ENCODE measurements at regions of chr2 and their contacts with region 1.

Region 1: GRCh38 chr2:72137498-72138010 is 10.1 kb downstream of the CYP26B1 start:
- DNase-seq: peak in 1 of 2 donors; percentile 39
- ATAC-seq: peak; percentile 53 to 86
- H3K4me3 ChIP-seq: peak overlapping the region in 1 of 4 donors; percentile 11
- H3K27ac ChIP-seq: no peak overlapping the region
- H3K4me1 ChIP-seq: peaks cover 3 to 19% of the 10 kb centered on the region in 2 donors
- H3K27me3 ChIP-seq: no peaks in the 10 kb centered on the region
- CTCF ChIP-seq: peak; percentile 66 to 95 (median 80)
- POLR2A ChIP-seq: no peak

Region 2: GRCh38 chr2:71831193-71831577 is 306.4 kb before region 1 on chr2:
- in situ Hi-C with region 1: no loop called
- intact Hi-C with region 1: no loop called
- DNase-seq: peak in 1 of 2 donors; percentile 28
- ATAC-seq: peak; percentile 45 to 72
- H3K4me3 ChIP-seq: no peak overlapping the region
- H3K27ac ChIP-seq: peak overlapping the region in 1 of 4 donors; percentile 20
- H3K4me1 ChIP-seq: peaks cover 0 to 14% of the 10 kb centered on the region in 2 donors
- H3K27me3 ChIP-seq: no peaks in the 10 kb centered on the region
- CTCF ChIP-seq: no peak
- POLR2A ChIP-seq: no peak

Region 3: GRCh38 chr2:71933467-71934319 is 203.9 kb before region 1 on chr2:
- in situ Hi-C with region 1: loop called in 1 of 4 experiments (anchors 10 kb)
- intact Hi-C with region 1: no loop called
- DNase-seq: no peak
- ATAC-seq: no peak
- H3K4me3 ChIP-seq: no peak overlapping the region
- H3K27ac ChIP-seq: no peak overlapping the region
- H3K4me1 ChIP-seq: peaks cover 0 to 7% of the 10 kb centered on the region in 2 donors
- H3K27me3 ChIP-seq: no peaks in the 10 kb centered on the region
- CTCF ChIP-seq: peak in 1 of 5 experiments; percentile 25
- POLR2A ChIP-seq: no peak

Measured in gastrocnemius medialis (tissue), 4 donors.